Caco-2 (cell line): ENCODE measurements at regions of chr3 and their contacts with region 1.

Region 1: GRCh38 chr3:88149509-88150362 is at the start of gene C3orf38:
- DNase-seq: peak; percentile 88 to 90
- H3K4me3 ChIP-seq: peak within 1 kb of the TSS; percentile 70
- H3K4me3 Mint-ChIP-seq: peak within 1 kb of the TSS; percentile 95
- H3K27ac Mint-ChIP-seq: peak within 1 kb of the TSS; percentile 96
- H3K4me1 ChIP-seq: no peaks in the 10 kb centered on the region
- H3K4me1 Mint-ChIP-seq: peaks cover 6% of the 10 kb centered on the region
- H3K27me3 ChIP-seq: no peaks in the 10 kb centered on the region
- H3K27me3 Mint-ChIP-seq: no peaks in the 10 kb centered on the region
- CTCF ChIP-seq: no peak
- total RNA-seq, gene C3orf38: 20.4 and 22.8 TPM in 2 replicates

Region 2: GRCh38 chr3:88058591-88059368 is 91.0 kb before region 1 on chr3 and contains the starts of genes CGGBP1 and ZNF654:
- CTCF ChIA-PET with region 1: no interaction called
- POLR2A ChIA-PET with region 1: interaction called, 5 read pairs
- intact Hi-C with region 1: loop called (anchors 1 kb)
- DNase-seq: peak; percentile 98
- H3K4me3 ChIP-seq: peak within 1 kb of the TSS; percentile 99
- H3K4me3 Mint-ChIP-seq: peak within 1 kb of the TSS; percentile 86
- H3K27ac Mint-ChIP-seq: peak within 1 kb of the TSS; percentile 70
- H3K4me1 ChIP-seq: 0 out of 2 replicates have a peak, but pooled peaks cover 11% of the 10 kb centered on the region
- H3K4me1 Mint-ChIP-seq: peaks cover 6% of the 10 kb centered on the region
- H3K27me3 ChIP-seq: no peaks in the 10 kb centered on the region
- H3K27me3 Mint-ChIP-seq: no peaks in the 10 kb centered on the region
- CTCF ChIP-seq: no peak
- total RNA-seq, gene CGGBP1: 42.6 and 43.2 TPM in 2 replicates
- total RNA-seq, gene ZNF654: 6.8 and 8.9 TPM in 2 replicates

Region 3: DNA sequence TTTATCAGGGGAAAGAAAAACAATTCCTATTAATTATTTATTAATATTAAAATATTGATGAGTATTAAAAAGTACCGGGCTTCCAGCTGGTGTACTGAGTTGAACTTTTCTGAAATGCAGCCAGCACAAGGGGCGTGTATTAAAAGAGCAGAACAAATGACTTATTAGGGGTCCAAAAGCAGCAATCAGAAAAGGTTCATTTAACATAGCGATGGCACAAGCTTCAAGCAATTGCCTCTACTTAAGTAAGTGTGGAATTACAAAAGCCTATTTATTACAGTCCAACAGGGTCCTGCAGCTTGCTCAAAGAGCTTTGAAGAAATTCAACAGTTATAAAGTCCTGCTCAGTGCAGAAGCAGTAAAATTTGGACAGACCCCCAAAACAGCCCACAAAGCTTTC is 1243.3 kb after region 1 on chr3:
- CTCF ChIA-PET with region 1: no interaction called
- POLR2A ChIA-PET with region 1: interaction called, 13 read pairs
- intact Hi-C with region 1: no loop called
- DNase-seq: no peak
- H3K4me3 ChIP-seq: no peak overlapping the region
- H3K4me3 Mint-ChIP-seq: no peak overlapping the region
- H3K27ac Mint-ChIP-seq: no peak overlapping the region
- H3K4me1 ChIP-seq: no peaks in the 10 kb centered on the region
- H3K4me1 Mint-ChIP-seq: no peaks in the 10 kb centered on the region
- H3K27me3 ChIP-seq: no peaks in the 10 kb centered on the region
- H3K27me3 Mint-ChIP-seq: no peaks in the 10 kb centered on the region
- CTCF ChIP-seq: no peak